ENCODE measurements at regions of chr10 and their contacts with region 1.

Region 1: GRCh38 chr10:23438550-23439441 is at the start of gene OTUD1:
- DNase-seq: peak; percentile 94
- H3K4me3 Mint-ChIP-seq: peak within 1 kb of the TSS; percentile 80
- H3K27ac Mint-ChIP-seq: peak within 1 kb of the TSS; percentile 71
- H3K4me1 Mint-ChIP-seq: peaks cover 36% of the 10 kb centered on the region
- H3K27me3 Mint-ChIP-seq: no peaks in the 10 kb centered on the region
- total RNA-seq, gene OTUD1: 23.4 to 23.9 TPM

Region 2: GRCh38 chr10:23293145-23293724 is 145.6 kb before region 1 on chr10:
- CTCF ChIA-PET with region 1: no interaction called
- POLR2A ChIA-PET with region 1: no interaction called
- DNase-seq: peak; percentile 26
- H3K4me3 Mint-ChIP-seq: no peak overlapping the region
- H3K27ac Mint-ChIP-seq: no peak overlapping the region
- H3K4me1 Mint-ChIP-seq: no peaks in the 10 kb centered on the region
- H3K27me3 Mint-ChIP-seq: peaks cover 17% of the 10 kb centered on the region

Region 3: GRCh38 chr10:23362879-23363792 is 75.7 kb before region 1 on chr10:
- CTCF ChIA-PET with region 1: interaction called, 6 read pairs
- POLR2A ChIA-PET with region 1: interaction called, 63 read pairs
- DNase-seq: peak; percentile 57
- H3K4me3 Mint-ChIP-seq: peak overlapping the region; percentile 68
- H3K27ac Mint-ChIP-seq: peak overlapping the region; percentile 98
- H3K4me1 Mint-ChIP-seq: peaks cover 53% of the 10 kb centered on the region
- H3K27me3 Mint-ChIP-seq: no peaks in the 10 kb centered on the region

Region 4: DNA sequence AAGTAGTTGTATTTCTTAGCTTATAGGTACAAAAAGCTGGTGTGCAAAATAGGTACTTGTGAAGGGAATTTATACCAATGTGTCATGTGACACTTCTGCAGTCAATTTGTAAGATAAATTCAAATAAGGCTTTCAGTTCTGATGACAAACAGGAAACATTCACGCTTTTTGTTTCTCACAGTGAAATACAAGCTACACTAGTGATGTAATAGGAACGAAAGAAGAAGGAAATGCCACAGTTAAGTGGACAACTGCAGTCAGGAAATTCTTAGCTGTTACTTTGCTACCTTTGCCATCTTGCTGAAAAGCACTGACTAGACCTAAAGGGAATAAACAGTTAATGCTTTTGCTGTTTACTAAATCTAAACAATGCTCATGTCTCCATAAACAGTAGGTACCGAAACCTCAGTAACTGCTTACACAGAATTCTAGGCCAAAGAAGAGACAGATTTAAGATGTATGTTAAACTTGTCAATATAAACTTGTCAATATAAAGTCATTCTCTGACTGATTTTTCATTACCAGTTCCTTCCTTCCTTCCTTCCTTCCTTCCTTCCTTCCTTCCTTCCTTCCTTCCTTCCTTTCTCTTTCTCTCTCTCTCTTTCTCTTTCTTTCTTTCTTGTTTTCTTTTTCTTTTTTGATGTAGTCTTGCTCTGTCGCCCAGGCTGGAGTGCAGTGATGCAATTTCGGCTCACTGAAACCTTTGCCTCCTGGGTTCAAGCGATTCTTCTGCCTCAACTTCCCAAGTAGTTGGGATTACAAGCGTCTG is 10.2 kb after region 1 on chr10:
- CTCF ChIA-PET with region 1: no interaction called
- POLR2A ChIA-PET with region 1: interaction called, 33 read pairs
- DNase-seq: no peak
- H3K4me3 Mint-ChIP-seq: no peak overlapping the region
- H3K27ac Mint-ChIP-seq: peak overlapping the region; percentile 62
- H3K4me1 Mint-ChIP-seq: peaks cover 36% of the 10 kb centered on the region
- H3K27me3 Mint-ChIP-seq: no peaks in the 10 kb centered on the region

Region 5: DNA sequence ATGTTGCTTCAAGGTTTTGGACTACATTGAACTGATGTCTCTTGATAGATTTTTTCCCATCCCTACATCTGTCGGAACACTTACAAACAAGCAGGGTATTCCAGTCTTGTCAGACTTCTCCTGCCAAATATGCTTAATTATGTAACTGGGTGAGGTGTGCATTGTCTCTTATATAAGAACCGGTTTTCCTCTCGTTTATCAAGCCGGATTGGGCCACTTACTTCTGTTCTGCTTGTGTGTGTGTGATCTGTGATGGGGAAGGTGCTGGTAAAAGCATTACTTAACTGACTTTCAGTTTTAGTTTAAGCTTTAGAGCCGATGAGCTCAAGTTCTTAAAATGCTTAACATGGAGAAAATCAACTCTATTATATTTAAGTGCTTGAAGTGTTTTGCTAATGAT is 57.9 kb after region 1 on chr10:
- CTCF ChIA-PET with region 1: no interaction called
- POLR2A ChIA-PET with region 1: no interaction called
- DNase-seq: no peak
- H3K4me3 Mint-ChIP-seq: no peak overlapping the region
- H3K27ac Mint-ChIP-seq: no peak overlapping the region
- H3K4me1 Mint-ChIP-seq: no peaks in the 10 kb centered on the region
- H3K27me3 Mint-ChIP-seq: peaks cover 8% of the 10 kb centered on the region

Measured in activated CD4-positive, alpha-beta memory T cell treated with anti-CD3 and anti-CD28 coated beads, Interleukin-2, amount 10 ng/mL, durations not matched to agents 7 days and 5 days (primary cell).